Dendritic cell treated with granulocyte-macrophage colony-stimulating factor and Interleukin-4, amounts not matched to agents 40 ng/mL and 50 ng/mL, for 4 days (primary cell): ENCODE measurements at regions of chr15 and their contacts with region 1.

Region 1: DNA sequence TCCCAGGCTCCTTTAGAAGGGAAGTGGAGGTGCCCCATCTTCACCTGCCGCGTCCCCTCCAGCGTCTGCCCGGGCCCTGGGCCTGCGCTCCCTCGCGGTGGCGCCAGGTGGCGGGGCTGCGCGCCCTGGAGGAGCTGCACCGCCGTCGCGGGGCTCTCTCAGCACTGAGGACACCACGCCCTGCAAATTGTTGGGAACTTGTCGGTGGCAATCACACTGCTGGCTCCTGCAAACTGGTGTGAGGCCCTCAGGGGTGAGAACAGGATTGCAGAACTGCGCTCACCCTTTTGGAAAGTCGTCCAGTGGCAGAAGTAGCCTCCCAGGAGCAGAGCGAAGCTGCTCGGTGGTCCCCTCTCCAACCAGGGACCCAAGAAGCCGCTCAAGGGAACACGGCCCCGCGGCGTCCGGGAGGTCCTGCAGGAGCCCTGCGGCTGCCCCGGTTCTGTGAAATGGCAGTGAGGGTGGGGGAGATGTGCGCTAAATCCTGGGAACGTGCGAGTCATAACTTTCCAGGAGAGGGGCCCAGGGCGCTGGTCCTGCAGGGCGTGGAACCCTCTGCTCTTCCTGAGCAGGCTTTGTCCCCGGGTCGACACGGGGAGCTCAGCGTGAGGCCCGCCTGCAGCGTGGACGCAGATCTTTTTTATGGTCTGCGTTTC is 995 bp upstream of the LRRK1 start:
- H3K4me3 Mint-ChIP-seq: peak overlapping the region; percentile 83
- H3K27ac Mint-ChIP-seq: peak overlapping the region; percentile 86
- H3K4me1 Mint-ChIP-seq: peaks cover 66% of the 10 kb centered on the region
- H3K27me3 Mint-ChIP-seq: peaks cover 4% of the 10 kb centered on the region

Region 2: GRCh38 chr15:100937171-100937570 is 19.0 kb after region 1 on chr15:
- intact Hi-C with region 1: loop called (anchors 2 kb)
- H3K4me3 Mint-ChIP-seq: no peak overlapping the region
- H3K27ac Mint-ChIP-seq: no peak overlapping the region
- H3K4me1 Mint-ChIP-seq: peaks cover 45% of the 10 kb centered on the region
- H3K27me3 Mint-ChIP-seq: no peaks in the 10 kb centered on the region

Region 3: DNA sequence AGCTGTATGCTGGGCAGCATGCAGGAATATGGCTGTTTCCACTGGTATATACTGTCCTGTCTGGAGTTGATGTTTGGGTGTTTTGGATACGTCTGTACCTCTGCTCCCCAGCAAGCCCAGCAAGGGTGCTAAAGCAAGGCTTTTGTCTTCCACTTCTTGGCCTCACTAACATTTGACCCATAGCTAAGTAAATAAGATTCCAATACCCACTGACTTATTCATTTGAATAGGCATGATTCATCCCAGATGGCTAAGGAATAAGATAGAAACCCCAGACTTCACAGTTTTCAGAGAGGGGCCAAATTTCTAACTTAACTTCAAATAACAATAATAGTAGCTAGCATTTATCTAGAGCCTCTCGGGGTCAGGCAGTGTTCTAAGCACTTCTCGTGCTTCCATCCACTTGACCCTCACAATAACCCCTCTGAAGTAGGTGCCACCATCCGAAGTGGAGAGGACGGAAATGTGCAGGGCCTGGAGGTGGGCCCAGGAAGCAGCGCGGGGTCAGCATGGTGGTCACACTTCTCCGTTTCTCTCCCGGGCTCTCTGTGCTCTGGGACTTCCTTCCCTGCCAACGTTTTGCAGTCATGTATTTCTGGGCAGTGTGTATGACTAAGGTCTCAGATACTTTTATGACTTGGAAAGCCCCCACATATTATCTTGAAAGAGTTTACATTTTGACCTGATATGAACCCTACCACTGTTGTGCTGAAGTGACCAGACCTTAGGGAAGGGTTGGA is 40.3 kb after region 1 on chr15:
- intact Hi-C with region 1: loop called (anchors 5 kb)
- H3K4me3 Mint-ChIP-seq: peak overlapping the region; percentile 51
- H3K27ac Mint-ChIP-seq: peak overlapping the region; percentile 76
- H3K4me1 Mint-ChIP-seq: peaks cover 57% of the 10 kb centered on the region
- H3K27me3 Mint-ChIP-seq: no peaks in the 10 kb centered on the region

Region 4: DNA sequence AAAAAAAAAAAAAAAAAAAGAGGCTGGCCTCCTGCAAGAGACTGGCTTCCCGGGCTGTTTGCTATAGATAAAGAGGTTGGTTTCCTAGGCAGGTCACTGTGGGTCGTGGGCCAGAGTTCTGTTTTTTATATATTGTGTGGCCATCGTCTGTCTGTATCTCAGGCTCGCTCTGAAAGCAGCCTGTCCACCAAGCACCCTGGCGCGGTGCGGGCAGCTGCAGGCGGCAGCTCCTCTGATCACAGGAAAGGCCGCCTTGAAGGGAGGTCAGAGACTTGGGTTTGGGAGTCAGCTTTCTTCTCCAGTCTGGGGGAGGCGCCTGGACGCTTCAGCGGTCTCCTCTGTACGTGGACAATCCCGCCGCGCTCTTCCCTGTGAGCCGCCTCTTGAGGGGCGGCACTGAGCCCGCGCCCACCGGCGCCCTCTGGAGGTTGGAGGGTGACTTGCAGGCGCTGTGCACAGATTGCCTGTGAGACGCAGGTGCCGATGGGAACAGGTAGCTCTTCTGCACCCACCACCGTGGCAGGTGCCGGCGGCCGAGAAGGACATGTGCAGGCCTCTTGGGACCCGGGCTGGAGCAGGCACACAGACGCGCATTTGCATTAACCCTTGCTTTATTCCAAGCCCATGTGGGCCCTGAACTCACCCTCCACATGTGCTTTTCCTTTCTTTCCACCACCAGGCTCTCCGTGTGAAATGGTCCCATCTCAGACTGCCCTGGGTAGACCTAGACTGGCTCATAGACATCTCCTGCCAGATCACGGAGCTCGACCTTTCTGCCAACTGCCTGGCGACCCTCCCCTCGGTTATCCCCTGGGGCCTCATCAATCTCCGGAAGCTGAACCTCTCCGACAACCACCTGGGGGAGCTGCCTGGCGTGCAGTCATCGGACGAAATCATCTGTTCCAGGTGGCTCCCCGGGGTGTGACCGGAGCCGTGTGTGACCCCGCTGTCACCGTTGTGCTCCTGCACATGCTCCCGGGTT is 90.3 kb after region 1 on chr15:
- intact Hi-C with region 1: loop called (anchors 1 kb)
- H3K4me3 Mint-ChIP-seq: peak overlapping the region; percentile 76
- H3K27ac Mint-ChIP-seq: peak overlapping the region; percentile 50
- H3K4me1 Mint-ChIP-seq: peaks cover 36% of the 10 kb centered on the region
- H3K27me3 Mint-ChIP-seq: peaks cover 14% of the 10 kb centered on the region

Region 5: DNA sequence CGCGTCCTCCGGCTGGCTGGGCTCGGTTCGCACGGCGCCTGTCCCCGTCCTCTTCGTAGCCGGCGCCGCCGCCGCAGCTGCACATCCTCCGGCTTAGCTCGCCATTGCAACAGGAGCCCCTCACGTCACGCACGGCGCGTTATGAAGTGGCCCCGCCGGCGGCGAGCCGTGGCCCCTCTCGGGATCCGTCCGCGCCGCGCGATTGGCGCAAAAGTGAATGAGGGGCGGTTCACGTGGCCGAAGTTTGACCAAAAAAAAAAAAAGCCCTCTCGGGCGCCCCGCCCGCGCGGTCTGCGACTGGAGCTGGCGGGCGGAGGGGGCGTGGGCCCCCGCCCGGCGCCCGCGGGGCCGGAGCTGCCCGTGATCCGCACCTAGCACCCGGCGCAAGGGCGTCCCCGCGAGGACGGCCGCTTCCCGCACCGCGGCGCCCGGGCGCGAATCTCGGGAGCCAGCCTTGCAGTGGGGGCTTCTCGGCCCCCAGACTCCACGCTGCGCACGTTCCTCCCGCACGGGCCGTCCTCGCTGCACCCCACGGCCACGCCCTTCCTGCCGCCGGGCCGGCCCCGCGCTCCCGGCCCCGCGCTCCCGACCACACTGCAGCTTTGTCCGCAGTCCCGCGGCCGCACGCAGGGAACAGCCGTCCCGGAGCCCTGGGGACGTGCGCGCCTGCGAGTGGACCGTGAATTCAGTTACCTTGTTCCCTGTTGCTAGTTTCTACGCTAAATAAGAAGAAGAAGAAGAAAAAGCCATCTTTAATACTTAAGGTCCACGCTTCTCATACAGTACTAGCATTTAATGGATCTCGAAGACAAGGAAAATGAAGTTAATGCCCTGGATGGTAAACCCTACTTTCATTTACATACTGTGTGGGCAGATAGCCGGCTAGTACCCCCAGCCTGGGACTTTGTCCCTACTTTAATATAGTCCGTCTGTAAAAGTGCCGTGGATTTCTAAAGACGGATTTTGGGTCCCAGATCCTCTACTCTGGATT is 334.0 kb after region 1 on chr15 and contains the start of gene CHSY1:
- intact Hi-C with region 1: loop called (anchors 10 kb)
- H3K4me3 Mint-ChIP-seq: peak within 1 kb of the TSS; percentile 97
- H3K27ac Mint-ChIP-seq: peak within 1 kb of the TSS; percentile 91
- H3K4me1 Mint-ChIP-seq: peaks cover 41% of the 10 kb centered on the region
- H3K27me3 Mint-ChIP-seq: peaks cover 7% of the 10 kb centered on the region